ENCODE measurements at regions of chr2 and their contacts with region 1.

Region 1: DNA sequence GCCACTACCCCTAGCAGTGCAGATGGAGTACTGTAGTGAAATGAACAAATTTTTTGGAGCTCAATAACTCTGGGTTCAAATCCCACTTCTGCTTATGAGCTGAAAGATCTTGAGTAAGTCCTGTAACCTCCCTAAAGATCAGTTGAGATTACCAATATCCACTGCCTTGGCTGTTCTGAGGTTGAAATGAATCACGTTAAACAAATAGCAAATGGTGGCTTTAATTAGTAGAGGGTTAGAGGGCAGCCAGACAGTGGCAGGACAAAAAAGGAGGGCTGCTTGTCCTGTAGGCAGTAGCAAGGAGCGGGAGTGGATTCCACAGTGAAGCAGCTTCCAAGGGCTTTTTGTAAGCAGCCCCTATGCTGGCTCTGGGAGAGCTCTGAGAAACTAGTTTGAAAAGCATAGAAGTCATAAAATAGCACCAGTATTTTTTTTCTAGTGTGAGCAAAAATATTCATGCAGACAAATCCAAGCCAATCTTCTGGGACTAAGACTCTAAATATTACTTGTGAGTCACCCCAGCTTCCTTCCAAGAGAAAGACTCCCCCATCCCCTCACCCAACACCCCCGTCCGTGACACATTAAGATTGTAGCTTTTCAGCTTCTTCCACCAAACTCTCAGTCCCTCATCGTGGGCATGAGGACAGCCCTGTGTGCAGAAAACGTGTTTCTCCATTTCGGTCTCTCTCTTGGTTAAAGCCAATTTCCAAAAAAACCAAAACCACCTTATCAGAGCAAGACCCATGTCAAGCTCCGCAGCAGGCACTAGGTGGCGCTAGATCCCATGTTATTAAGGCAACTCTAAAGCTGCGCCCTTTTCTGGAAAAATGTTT is 123.5 kb upstream of the LGALSL start:
- DNase-seq: peak; percentile 46
- H3K4me3 ChIP-seq: peak overlapping the region; percentile 52
- CTCF ChIP-seq: peak; percentile 83

Region 2: DNA sequence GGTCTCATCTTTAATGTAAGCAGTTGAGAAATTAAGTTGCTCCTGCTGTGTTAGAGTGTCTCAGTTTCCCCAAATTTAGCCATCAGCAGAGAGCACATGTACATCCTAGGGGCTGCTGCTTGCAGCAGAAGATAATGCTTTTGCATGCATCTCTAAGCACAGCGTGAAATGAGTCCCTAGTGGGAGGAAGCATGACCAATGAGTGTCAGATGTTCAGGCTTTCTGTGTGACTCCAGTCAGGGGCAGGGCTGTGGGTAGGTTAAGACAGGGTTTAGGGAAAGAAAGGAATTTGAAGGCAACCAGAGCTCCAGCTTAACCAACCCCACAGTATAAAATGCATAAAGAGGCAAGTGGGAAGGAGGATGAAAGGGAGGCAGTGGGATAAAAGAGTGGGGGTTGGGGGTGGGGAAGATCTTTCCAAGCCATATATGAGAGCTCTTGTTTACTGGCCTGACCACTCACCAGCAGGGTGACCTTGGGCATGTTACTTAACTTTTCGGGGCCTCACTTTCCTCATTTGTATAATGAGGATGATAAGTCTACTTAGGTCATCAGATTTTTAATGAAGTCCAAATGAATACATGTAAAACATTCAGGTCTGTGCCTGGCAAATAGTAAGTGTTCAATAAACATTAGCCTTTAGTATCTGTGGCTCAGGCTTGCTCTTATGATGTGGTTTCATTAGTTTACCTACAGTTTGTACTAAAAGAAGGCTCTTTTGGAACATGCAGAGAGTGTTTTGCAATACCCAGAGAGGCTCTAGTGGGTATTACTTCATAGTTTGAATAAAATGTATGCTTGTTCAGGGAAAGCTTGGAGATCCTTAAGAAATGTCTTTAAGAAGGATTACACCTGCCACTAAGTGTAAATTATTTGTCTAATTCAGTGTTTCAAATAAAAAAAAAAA is 143.5 kb before region 1 on chr2:
- CTCF ChIA-PET with region 1: no interaction called
- POLR2A ChIA-PET with region 1: no interaction called
- DNase-seq: no peak
- H3K4me3 ChIP-seq: no peak overlapping the region
- CTCF ChIP-seq: no peak

Region 3: GRCh38 chr2:64311948-64312621 is 18.4 kb before region 1 on chr2:
- CTCF ChIA-PET with region 1: interaction called, 112 read pairs
- POLR2A ChIA-PET with region 1: no interaction called
- DNase-seq: peak; percentile 37
- H3K4me3 ChIP-seq: no peak overlapping the region
- CTCF ChIP-seq: peak; percentile 67

Region 4: DNA sequence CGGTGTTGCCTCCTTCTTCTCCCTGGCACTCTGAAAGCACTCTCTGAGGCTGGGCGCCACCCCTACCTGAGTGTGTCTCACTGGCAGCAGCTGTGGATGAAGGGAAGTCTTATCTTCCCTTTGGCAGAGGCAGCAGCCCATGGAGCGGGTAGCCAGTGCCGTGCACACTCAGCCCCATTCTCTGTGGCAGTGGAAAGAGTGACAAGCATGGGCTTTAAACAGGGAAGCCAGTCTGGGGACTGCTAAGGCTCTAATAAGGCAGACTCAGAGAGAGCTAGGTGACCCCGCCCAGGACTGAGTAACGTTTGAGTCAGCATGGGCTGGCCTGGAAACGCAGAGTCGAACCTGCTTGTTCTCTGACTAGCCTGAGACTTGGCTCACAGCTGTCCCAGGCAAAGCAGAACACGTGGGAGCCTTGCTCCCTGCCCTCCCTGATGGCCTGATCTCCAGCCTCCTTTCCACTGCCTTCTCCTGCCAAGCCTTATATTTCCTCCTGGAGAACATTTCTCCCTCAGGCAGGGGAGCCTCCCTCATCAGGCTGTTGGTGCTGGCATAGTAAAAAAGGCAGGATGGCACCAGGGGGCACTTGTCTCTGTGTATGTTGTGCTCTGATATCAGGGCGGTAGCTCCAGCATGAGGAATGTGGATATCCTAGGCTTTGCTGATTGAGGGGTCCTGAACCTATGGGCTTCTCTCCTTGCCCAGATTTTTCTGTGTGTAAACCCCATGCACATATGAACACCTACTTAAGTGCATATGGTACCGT is 29.6 kb after region 1 on chr2:
- CTCF ChIA-PET with region 1: interaction called, 27 read pairs
- POLR2A ChIA-PET with region 1: interaction called, 3 read pairs
- DNase-seq: peak; percentile 46
- H3K4me3 ChIP-seq: peak overlapping the region; percentile 8; the same call in 1 of the 2 replicates
- CTCF ChIP-seq: no peak

Region 5: DNA sequence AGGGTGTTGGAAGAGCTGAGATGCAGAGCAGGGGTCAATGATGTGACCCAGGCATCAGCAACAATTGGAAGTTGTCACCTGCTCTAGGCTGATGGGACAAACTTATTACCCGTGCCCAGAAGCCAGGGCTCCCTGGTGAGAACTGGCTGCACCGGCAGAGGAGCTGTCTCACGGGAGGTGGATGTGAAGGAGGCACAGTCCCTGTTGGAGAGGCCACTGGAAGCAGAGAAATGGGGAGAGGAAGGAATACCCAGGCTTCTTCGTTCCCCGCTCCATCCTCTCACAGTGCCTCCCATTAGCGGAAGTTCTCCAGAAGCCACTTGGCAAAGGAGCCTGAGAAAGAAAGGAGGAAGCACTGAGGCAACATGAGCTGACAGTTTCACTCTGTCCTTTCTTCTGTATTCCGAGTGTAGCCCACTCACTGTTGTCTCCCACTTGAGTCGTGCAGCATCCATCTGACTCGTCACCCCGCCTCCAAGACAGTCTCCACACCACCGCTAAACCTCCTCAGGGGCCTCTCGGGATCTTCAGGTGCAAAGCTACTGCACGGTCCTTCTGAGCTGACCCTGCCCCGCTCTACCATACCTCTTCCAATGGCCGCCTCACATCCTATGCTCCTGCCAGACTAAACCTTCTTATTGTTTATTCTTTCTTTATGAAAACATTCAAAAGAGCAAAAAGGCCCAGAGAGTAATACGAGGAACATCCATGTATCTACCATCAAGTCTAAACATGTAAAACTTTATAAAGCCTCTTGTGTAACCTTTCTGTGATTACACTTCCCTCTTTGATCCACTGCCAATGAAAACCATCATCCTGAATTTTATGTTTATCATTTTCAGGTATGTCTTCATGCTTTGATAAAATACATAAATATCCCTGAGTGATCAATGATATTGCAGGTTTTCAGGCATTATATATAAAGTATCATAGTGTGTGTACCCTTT is 174.6 kb after region 1 on chr2:
- CTCF ChIA-PET with region 1: interaction called, 21 read pairs
- POLR2A ChIA-PET with region 1: no interaction called
- DNase-seq: no peak
- H3K4me3 ChIP-seq: no peak overlapping the region
- CTCF ChIP-seq: no peak

Region 6: DNA sequence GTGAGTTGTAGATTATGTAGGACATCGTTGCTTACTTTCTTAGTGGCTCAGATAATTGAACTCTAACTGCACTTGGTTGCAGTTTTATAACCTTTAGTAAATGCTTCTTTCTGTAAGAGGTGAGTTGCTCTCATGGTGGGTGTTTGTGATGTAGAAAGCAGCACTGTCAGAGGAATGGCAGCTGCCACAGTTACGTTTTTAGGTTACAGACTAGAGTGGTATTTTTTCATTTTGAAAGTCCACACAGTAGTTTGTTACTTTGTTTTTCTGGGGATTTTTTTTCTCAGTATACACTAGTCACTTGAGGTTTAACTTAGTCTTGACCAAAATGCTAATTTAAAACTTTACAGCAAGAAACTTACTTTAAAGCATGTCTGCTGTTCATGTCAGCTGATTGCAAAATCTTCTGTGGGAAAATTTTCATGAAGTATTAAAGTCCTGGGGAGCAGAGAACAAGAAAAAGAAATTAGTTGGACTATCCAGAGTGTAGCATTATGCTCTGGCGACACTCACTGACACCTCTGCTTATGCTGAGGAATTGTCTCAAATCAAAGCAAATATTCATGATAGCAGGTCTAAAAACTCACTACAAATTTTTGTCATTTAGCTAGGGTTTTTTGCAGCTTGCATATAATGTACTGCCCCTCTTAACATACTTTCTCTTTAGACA is 208.4 kb after region 1 on chr2:
- CTCF ChIA-PET with region 1: interaction called, 28 read pairs
- POLR2A ChIA-PET with region 1: no interaction called
- DNase-seq: no peak
- H3K4me3 ChIP-seq: no peak overlapping the region
- CTCF ChIP-seq: no peak

Region 7: DNA sequence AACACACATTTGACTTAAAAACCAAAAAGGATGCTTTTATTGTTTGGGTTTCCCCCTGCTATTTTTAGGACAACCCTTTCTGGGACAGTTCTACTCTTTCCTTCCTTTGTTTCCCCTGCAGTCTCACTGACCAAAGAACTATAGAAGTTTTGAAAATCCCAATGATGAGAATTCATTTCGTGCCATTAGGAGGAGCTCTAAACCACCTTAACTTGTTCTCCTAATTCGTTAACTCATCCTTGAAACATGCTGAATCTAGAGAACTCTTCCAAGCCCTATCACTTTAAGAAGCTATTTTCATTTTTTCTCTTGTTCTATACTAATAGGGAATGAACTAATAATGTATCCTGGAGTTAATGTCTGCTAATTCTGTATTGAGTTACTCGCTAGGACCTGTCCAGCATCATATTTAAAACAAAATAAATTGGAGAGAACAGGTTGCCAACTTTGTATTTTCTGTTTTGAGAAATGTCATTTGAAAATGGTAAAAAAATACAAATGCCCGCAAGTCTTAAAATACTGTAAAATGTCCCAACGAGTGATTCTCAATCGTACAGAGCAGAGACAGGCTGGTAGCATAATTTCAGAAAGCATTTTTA is 256.5 kb after region 1 on chr2:
- CTCF ChIA-PET with region 1: interaction called, 26 read pairs
- POLR2A ChIA-PET with region 1: no interaction called
- DNase-seq: peak; percentile 17
- H3K4me3 ChIP-seq: no peak overlapping the region
- CTCF ChIP-seq: peak; percentile 62

Region 8: DNA sequence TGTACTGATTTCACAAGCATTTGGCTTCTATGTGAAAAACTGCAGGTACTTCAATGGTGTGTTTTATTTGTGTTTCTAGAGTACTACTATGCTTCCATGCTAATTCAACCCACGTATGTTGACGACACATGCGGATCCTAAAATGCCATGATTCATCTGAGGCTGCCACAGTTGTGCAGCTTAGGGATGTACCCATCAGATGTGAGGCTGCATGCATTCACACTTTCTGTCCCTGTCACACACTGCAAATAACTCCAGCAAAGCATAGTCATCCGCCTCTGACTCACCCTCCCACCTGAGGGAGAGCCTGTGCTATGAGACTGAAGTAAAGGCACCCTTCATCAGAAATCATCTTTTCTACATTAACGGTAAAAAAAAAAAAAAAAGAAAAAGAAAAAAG is 345.4 kb after region 1 on chr2:
- CTCF ChIA-PET with region 1: no interaction called
- POLR2A ChIA-PET with region 1: no interaction called
- DNase-seq: no peak
- H3K4me3 ChIP-seq: no peak overlapping the region
- CTCF ChIP-seq: no peak

Region 9: DNA sequence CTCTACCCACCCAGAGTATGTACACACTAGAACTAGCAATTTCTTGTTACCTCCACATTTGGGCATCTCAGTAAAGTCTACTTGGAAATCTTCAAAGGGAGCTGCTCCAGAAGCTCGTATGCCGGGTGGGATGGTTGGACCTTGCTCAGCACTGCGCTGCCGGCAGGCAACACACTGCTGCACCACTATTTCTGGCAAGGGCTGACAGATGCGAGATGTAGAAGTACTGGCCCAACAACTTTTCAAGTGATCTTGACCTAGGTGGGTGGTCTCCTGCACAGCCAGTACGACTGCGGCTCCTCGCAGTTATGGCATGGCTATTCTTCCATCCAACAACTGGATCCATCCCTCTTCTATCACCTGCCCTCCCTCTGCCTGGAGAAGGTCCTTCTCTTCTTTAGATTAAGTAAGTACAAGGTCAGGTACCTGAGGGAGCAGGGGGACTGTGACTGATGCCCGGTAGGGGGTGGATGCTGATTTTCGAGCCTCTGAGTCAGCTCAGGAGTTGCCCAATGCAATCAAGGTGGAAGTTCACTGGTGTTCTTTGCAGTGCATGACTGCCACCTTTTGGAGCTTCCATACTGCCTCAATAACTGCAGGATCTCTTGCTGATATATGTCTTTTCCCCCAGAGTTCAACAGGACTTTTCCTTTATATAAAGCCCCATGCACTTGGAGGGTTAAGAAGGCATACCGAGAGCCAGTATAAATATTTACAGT is 558.3 kb after region 1 on chr2:
- CTCF ChIA-PET with region 1: interaction called, 19 read pairs
- POLR2A ChIA-PET with region 1: no interaction called
- DNase-seq: no peak
- H3K4me3 ChIP-seq: no peak overlapping the region
- CTCF ChIP-seq: peak; percentile 42

Measured in AG04449 (cell line).